Gastrocnemius medialis (tissue), 4 donors: ENCODE measurements at regions of chr2 and their contacts with region 1.

Region 1: GRCh38 chr2:62672601-62673000 is 32.9 kb upstream of the EHBP1 start:
- DNase-seq: no peak
- ATAC-seq: no peak
- H3K4me3 ChIP-seq: no peak overlapping the region
- H3K27ac ChIP-seq: no peak overlapping the region
- H3K4me1 ChIP-seq: no peaks in the 10 kb centered on the region
- H3K27me3 ChIP-seq: no peaks in the 10 kb centered on the region
- CTCF ChIP-seq: no peak
- POLR2A ChIP-seq: no peak

Region 2: GRCh38 chr2:62774555-62775366 is 102.2 kb after region 1 on chr2:
- in situ Hi-C with region 1: loop called in 1 of 4 experiments (anchors 25 kb)
- intact Hi-C with region 1: no loop called
- DNase-seq: no peak
- ATAC-seq: peak; percentile 63 to 76
- H3K4me3 ChIP-seq: no peak overlapping the region
- H3K27ac ChIP-seq: no peak overlapping the region
- H3K4me1 ChIP-seq: no peaks in the 10 kb centered on the region
- H3K27me3 ChIP-seq: no peaks in the 10 kb centered on the region
- CTCF ChIP-seq: peak; percentile 58 to 90 (median 80)
- POLR2A ChIP-seq: no peak